ENCODE measurements at regions of chr6 and their contacts with region 1.

Region 1: DNA sequence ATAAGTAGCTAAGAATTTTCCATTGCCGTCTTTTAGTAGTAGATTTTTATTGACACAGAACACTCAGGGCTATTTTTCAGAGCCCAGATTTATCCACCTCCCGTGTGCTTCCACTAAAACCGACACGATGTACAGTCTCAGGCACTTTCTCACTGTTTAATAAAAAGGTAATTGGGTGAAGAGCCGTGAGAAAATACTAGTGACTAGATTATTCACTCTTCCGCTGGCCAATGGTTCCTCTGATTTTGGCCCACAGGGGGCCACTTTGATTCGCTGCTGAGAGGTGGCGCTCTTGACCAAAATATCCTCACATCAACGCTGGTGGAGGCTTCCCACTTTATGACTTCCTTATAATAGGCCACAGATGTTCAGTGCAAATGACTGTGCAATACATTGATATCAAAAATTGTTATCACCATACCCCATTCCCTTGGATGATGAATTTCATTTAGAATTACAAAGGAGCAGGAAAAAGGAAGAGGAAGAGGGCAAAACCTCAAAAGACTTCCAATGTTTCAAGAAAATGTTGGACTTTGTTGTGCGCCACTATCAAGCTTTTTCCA is 12.3 kb upstream of the HDDC2 start:
- DNase-seq: peak; percentile 64
- H3K4me3 ChIP-seq: no peak overlapping the region
- H3K27ac ChIP-seq: no peak overlapping the region
- H3K4me1 ChIP-seq: no peaks in the 10 kb centered on the region
- H3K27me3 ChIP-seq: peaks cover 14% of the 10 kb centered on the region
- CTCF ChIP-seq: peak; percentile 63 to 75 (median 67)
- EP300 ChIP-seq: no peak
- POLR2A ChIP-seq: no peak

Region 2: GRCh38 chr6:125764121-125764671 is 450.1 kb after region 1 on chr6:
- in situ Hi-C with region 1: loop called (anchors 5 kb)
- intact Hi-C with region 1: loop called (anchors 5 kb)
- DNase-seq: no peak
- H3K4me3 ChIP-seq: no peak overlapping the region
- H3K27ac ChIP-seq: no peak overlapping the region
- H3K4me1 ChIP-seq: no peaks in the 10 kb centered on the region
- H3K27me3 ChIP-seq: peaks cover 62% of the 10 kb centered on the region
- CTCF ChIP-seq: no peak
- EP300 ChIP-seq: no peak
- POLR2A ChIP-seq: no peak

Region 3: GRCh38 chr6:125956506-125957390 is 642.6 kb after region 1 on chr6 and contains the start of gene HINT3:
- in situ Hi-C with region 1: loop called in 3 of 4 experiments (anchors 25 kb)
- intact Hi-C with region 1: no loop called
- DNase-seq: peak; percentile 99
- H3K4me3 ChIP-seq: peak within 1 kb of the TSS; percentile 66 to 85 (median 84)
- H3K27ac ChIP-seq: peak within 1 kb of the TSS; percentile 90 to 95 (median 92)
- H3K4me1 ChIP-seq: peaks cover 8 to 27% (median 11%) of the 10 kb centered on the region in 4 donors
- H3K27me3 ChIP-seq: no peaks in the 10 kb centered on the region
- CTCF ChIP-seq: peak; percentile 96 to 100 (median 98)
- EP300 ChIP-seq: no peak
- POLR2A ChIP-seq: peak; percentile 57
- total RNA-seq, gene HINT3: 23.5 to 35.2 (median 30.7) TPM

Region 4: DNA sequence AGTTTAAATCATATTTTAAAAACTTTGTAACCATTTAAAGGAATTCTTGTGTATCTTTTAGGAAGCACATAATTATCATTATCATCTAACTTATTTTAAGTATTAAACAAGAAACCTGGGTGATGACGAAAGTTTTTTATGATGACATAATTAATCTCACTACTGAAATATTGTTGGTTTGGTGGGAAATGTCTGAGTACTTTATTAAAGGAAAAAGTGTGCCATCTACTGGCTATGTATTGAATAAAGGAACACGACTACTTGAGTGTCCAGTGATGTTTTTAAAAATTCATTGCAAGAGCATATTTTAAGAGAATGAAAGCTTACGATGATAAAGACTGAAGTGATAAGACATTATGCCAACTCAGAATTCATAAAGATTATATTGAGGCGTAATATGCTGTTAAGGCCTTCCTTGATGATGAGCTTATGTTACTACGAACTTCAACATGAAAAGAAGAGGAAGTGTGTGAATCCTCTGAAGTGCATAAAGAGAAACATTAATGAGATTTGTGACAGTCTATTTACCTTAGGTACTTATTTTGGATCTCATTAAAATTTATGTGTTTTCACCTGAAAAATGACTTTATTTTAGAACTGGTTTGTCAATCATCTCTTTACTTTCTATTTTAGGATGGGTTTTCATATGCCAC is 660.2 kb after region 1 on chr6:
- in situ Hi-C with region 1: loop called (anchors 10 to 25 kb)
- intact Hi-C with region 1: no loop called
- DNase-seq: no peak
- H3K4me3 ChIP-seq: no peak overlapping the region
- H3K27ac ChIP-seq: no peak overlapping the region
- H3K4me1 ChIP-seq: no peaks in the 10 kb centered on the region
- H3K27me3 ChIP-seq: no peaks in the 10 kb centered on the region
- CTCF ChIP-seq: peak; percentile 45 to 54 (median 49)
- EP300 ChIP-seq: no peak
- POLR2A ChIP-seq: no peak